ENCODE measurements at regions of chr13 and their contacts with region 1.

Region 1: DNA sequence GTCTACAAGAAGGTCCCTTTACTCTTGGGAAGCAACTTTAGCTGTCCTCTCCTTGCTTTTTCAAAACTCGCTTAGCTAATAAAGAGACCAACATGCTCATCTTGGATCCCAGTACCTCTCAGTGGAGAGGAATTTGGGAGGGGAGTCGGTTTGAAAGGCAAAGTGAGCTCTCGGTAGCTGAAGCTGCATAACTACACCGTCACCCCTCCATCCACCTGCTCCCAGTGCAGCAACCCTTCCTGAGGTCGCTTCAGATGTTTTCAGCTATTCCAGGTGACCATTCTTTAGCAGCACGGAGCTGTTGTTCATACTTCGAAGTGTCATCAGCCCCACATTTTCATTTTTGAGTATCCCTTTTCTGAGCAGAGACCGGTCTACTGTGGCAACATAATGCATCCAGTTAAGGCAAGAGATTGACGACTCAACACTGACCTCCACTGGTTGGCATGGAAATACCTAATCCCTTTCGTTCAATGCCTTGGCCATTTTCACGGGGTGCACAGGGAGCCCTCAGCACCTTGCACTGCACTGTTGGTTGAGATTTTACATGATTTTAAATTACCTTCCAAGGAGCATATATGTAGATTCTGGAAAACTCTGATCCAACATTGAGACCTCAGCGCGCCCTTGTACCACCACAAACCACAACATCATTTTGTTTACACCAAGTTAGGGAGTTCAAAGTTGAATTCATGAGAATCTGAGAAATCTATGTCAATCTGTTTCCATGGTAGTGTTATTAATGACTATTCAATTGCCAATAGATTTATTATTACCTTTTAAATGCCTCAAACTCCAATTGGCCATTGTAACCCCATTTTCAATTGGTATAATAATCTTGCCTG is 42.2 kb downstream of the DLEU7 start:
- DNase-seq: peak; percentile 82
- H3K4me3 Mint-ChIP-seq: no peak overlapping the region
- H3K27ac Mint-ChIP-seq: no peak overlapping the region
- H3K4me1 Mint-ChIP-seq: peaks cover 5% of the 10 kb centered on the region
- H3K27me3 Mint-ChIP-seq: no peaks in the 10 kb centered on the region
- CTCF ChIP-seq: peak; percentile 85

Region 2: DNA sequence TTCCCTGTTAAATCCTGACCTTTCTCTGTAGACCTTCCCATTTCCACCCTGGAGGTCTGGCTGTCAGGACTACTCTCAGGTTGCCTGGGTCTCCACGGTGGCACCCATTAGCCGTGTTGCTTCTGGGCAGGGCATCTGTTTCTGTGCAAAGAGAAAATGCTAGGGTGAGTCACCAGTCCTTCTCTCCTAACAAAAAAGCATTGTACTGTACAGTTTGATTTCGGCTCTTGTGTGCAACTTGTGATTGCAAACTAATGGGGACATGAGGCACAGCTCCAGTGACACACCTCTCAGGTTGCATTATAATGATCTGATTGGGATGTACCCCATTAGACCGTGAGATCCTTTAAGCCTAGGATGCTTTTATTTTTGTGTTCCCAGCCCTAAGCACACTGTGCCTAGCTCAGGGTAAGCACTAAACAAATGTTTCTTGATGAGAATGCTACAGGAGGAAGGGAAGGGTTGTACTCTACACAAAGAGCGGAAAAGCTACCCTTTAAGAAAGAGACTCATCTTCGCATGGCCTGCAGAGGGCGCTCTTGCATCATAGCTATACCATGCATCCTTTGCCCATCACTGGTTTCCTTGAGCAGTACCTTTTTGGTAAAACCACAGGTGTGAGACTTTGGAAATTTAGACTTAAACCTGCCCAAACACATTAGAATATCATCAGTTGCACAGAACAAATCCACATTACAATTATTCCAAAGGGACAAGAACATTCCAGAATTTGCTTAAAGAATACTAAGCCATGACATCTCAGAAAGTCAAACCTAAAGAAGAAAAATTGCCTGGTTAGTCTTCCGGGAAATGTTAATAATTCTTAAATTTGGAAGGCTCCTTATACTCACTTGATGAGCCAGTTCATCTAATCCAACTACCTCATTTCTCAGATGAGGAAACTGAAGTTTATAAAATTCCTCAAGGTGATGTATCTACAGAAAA is 824.7 kb before region 1 on chr13:
- CTCF ChIA-PET with region 1: no interaction called
- POLR2A ChIA-PET with region 1: no interaction called
- intact Hi-C with region 1: loop called (anchors 5 kb)
- DNase-seq: peak; percentile 85
- H3K4me3 Mint-ChIP-seq: no peak overlapping the region
- H3K27ac Mint-ChIP-seq: peak overlapping the region; percentile 21
- H3K4me1 Mint-ChIP-seq: peaks cover 11% of the 10 kb centered on the region
- H3K27me3 Mint-ChIP-seq: no peaks in the 10 kb centered on the region
- CTCF ChIP-seq: peak; percentile 88

Region 3: GRCh38 chr13:49996951-49997895 is 804.1 kb before region 1 on chr13 and contains the start of gene TRIM13:
- CTCF ChIA-PET with region 1: no interaction called
- POLR2A ChIA-PET with region 1: no interaction called
- intact Hi-C with region 1: loop called (anchors 1 kb)
- DNase-seq: peak; percentile 91
- H3K4me3 Mint-ChIP-seq: peak within 1 kb of the TSS; percentile 89
- H3K27ac Mint-ChIP-seq: peak within 1 kb of the TSS; percentile 80
- H3K4me1 Mint-ChIP-seq: peaks cover 16% of the 10 kb centered on the region
- H3K27me3 Mint-ChIP-seq: no peaks in the 10 kb centered on the region
- CTCF ChIP-seq: peak; percentile 79
- total RNA-seq, gene TRIM13: 17.5 and 19.0 TPM in 2 replicates

Region 4: GRCh38 chr13:50170447-50171037 is 630.8 kb before region 1 on chr13:
- CTCF ChIA-PET with region 1: interaction called, 4 read pairs
- POLR2A ChIA-PET with region 1: no interaction called
- intact Hi-C with region 1: loop called (anchors 1 kb)
- DNase-seq: peak; percentile 42
- H3K4me3 Mint-ChIP-seq: no peak overlapping the region
- H3K27ac Mint-ChIP-seq: no peak overlapping the region
- H3K4me1 Mint-ChIP-seq: no peaks in the 10 kb centered on the region
- H3K27me3 Mint-ChIP-seq: no peaks in the 10 kb centered on the region
- CTCF ChIP-seq: peak; percentile 36

Region 5: GRCh38 chr13:50376895-50377575 is 424.3 kb before region 1 on chr13:
- CTCF ChIA-PET with region 1: no interaction called
- POLR2A ChIA-PET with region 1: no interaction called
- intact Hi-C with region 1: loop called (anchors 5 kb)
- DNase-seq: peak; percentile 47
- H3K4me3 Mint-ChIP-seq: no peak overlapping the region
- H3K27ac Mint-ChIP-seq: no peak overlapping the region
- H3K4me1 Mint-ChIP-seq: peaks cover 11% of the 10 kb centered on the region
- H3K27me3 Mint-ChIP-seq: no peaks in the 10 kb centered on the region
- CTCF ChIP-seq: peak; percentile 30

Region 6: GRCh38 chr13:50731400-50731799 is 69.9 kb before region 1 on chr13:
- CTCF ChIA-PET with region 1: interaction called, 10 read pairs
- POLR2A ChIA-PET with region 1: no interaction called
- intact Hi-C with region 1: no loop called
- DNase-seq: peak; percentile 86
- H3K4me3 Mint-ChIP-seq: peak overlapping the region; percentile 38
- H3K27ac Mint-ChIP-seq: peak overlapping the region; percentile 96
- H3K4me1 Mint-ChIP-seq: peaks cover 21% of the 10 kb centered on the region
- H3K27me3 Mint-ChIP-seq: no peaks in the 10 kb centered on the region
- CTCF ChIP-seq: no peak

Region 7: GRCh38 chr13:50911937-50912795 is 110.9 kb after region 1 on chr13:
- CTCF ChIA-PET with region 1: interaction called, 11 read pairs
- POLR2A ChIA-PET with region 1: no interaction called
- intact Hi-C with region 1: loop called (anchors 2 kb)
- DNase-seq: peak; percentile 90
- H3K4me3 Mint-ChIP-seq: peak overlapping the region; percentile 30
- H3K27ac Mint-ChIP-seq: no peak overlapping the region
- H3K4me1 Mint-ChIP-seq: peaks cover 16% of the 10 kb centered on the region
- H3K27me3 Mint-ChIP-seq: no peaks in the 10 kb centered on the region
- CTCF ChIP-seq: peak; percentile 90

Region 8: DNA sequence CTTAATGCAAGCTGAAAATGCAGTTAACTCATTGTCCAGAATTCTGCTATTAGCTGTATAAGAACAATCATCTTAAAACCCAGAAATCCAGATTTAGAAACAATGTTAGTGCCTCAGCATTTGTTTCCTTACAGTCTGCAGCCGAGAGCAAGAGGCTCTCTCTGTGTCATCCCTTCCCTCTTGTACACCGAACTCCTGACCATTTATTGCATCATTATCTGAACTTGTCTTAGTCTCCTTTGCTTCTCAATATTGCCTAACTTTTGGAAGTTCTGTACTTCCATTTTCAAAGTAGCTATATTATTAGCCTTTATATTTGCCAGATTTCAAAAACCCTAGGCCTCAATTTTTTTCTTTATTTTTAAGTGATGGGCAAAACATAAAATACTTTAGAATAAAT is 135.4 kb after region 1 on chr13:
- CTCF ChIA-PET with region 1: no interaction called
- POLR2A ChIA-PET with region 1: no interaction called
- intact Hi-C with region 1: no loop called
- DNase-seq: peak; percentile 11
- H3K4me3 Mint-ChIP-seq: no peak overlapping the region
- H3K27ac Mint-ChIP-seq: no peak overlapping the region
- H3K4me1 Mint-ChIP-seq: no peaks in the 10 kb centered on the region
- H3K27me3 Mint-ChIP-seq: no peaks in the 10 kb centered on the region
- CTCF ChIP-seq: no peak

Region 9: GRCh38 chr13:51311957-51312520 is 510.7 kb after region 1 on chr13:
- CTCF ChIA-PET with region 1: no interaction called
- POLR2A ChIA-PET with region 1: no interaction called
- intact Hi-C with region 1: no loop called
- DNase-seq: no peak
- H3K4me3 Mint-ChIP-seq: no peak overlapping the region
- H3K27ac Mint-ChIP-seq: no peak overlapping the region
- H3K4me1 Mint-ChIP-seq: no peaks in the 10 kb centered on the region
- H3K27me3 Mint-ChIP-seq: peaks cover 12% of the 10 kb centered on the region
- CTCF ChIP-seq: no peak

Measured in MCF 10A (cell line).